Transverse colon (tissue), 4 donors: ENCODE measurements at regions of chr16 and their contacts with region 1.

Region 1: GRCh38 chr16:69499541-69500230 is 66.1 kb upstream of the NFAT5 start:
- DNase-seq: no peak
- H3K4me3 ChIP-seq: no peak overlapping the region
- H3K27ac ChIP-seq: no peak overlapping the region
- H3K4me1 ChIP-seq: no peaks in the 10 kb centered on the region
- H3K27me3 ChIP-seq: no peaks in the 10 kb centered on the region
- CTCF ChIP-seq: no peak
- EP300 ChIP-seq: no peak
- POLR2A ChIP-seq: no peak

Region 2: GRCh38 chr16:69413045-69413664 is 86.5 kb before region 1 on chr16:
- in situ Hi-C with region 1: no loop called
- intact Hi-C with region 1: loop called (anchors 1 kb)
- DNase-seq: no peak
- H3K4me3 ChIP-seq: no peak overlapping the region
- H3K27ac ChIP-seq: no peak overlapping the region
- H3K4me1 ChIP-seq: peaks cover 11 to 51% (median 25%) of the 10 kb centered on the region in 4 donors
- H3K27me3 ChIP-seq: no peaks in the 10 kb centered on the region
- CTCF ChIP-seq: no peak
- EP300 ChIP-seq: no peak
- POLR2A ChIP-seq: no peak

Region 3: DNA sequence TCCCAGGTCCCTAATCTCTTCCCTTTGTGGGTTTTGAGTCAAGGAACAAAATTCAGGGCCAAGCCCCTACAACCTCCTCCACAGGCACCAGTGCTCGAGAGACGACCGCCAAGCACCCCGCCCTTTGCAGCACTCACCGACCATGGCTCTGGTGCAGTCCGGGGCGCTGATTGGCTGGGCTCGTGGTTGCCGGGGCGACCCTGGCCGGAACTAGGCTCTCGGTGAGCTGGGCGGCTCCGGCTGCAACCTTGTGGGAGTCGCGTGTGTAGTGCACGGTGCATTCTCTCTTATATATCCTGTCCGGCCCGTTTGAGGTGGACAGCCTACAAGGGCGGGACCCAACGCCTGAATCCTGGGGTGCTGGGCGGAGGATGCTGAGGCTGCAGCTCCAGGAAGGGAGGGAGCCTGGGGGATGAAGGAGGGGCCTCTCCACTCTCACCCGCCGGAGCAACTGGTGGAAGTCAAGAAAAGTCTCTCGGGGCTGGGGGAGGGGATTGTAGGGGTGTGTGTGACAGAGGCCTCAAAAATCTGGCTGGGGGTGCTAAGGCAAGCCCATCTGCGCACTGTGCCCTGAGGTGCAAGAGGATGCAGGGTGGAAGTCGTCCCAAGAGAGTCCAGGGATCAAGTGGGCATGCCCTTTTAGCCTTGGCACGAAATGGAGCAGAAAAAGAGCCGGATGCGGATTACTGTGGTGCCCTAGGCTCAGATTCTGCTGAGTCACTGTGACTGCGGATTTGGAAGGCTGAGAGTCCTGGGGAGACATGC is 226.8 kb after region 1 on chr16 and contains the start of gene NQO1:
- in situ Hi-C with region 1: no loop called
- intact Hi-C with region 1: no loop called
- DNase-seq: peak; percentile 96
- H3K4me3 ChIP-seq: peak within 1 kb of the TSS; percentile 29 to 58 (median 38)
- H3K27ac ChIP-seq: peak within 1 kb of the TSS; percentile 90 to 92 (median 90)
- H3K4me1 ChIP-seq: peaks cover 0 to 44% (median 40%) of the 10 kb centered on the region in 4 donors
- H3K27me3 ChIP-seq: no peaks in the 10 kb centered on the region
- CTCF ChIP-seq: no peak
- EP300 ChIP-seq: no peak
- POLR2A ChIP-seq: peak; percentile 90
- total RNA-seq, gene NQO1: 9.0 to 296 (median 165) TPM

Region 4: DNA sequence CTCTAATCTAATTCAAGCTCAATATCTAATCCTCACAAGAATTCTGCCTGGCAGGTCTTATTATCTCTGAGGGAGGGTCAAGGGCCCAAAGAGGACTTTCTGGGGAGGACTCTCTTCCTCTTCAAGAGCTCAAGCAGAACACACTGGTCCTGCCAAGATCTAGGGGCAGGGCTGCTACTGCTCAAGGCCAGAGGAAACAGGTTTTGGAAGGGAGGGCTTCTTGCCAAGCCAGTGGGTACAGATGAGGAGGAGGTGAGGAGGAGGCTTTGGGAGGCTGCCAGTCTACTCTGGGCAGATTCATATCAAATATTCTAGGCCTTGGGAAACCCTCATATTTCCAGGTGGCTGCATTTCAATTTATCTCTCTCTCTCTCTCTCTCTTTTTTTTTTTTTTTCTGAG is 1094.9 kb after region 1 on chr16:
- in situ Hi-C with region 1: no loop called
- intact Hi-C with region 1: no loop called
- DNase-seq: no peak
- H3K4me3 ChIP-seq: no peak overlapping the region
- H3K27ac ChIP-seq: no peak overlapping the region
- H3K4me1 ChIP-seq: peaks cover 7 to 24% (median 11%) of the 10 kb centered on the region in 4 donors
- H3K27me3 ChIP-seq: no peaks in the 10 kb centered on the region
- CTCF ChIP-seq: no peak
- EP300 ChIP-seq: no peak
- POLR2A ChIP-seq: no peak